ENCODE measurements at regions of chr4 and their contacts with region 1.

Region 1: GRCh38 chr4:89929425-89930159 is 34.9 kb downstream of the MMRN1 start:
- DNase-seq: no peak
- H3K4me3 ChIP-seq: no peak overlapping the region
- H3K27ac ChIP-seq: no peak overlapping the region
- H3K4me1 ChIP-seq: no peaks in the 10 kb centered on the region
- H3K27me3 ChIP-seq: no peaks in the 10 kb centered on the region
- CTCF ChIP-seq: no peak
- POLR2A ChIP-seq: no peak

Region 2: DNA sequence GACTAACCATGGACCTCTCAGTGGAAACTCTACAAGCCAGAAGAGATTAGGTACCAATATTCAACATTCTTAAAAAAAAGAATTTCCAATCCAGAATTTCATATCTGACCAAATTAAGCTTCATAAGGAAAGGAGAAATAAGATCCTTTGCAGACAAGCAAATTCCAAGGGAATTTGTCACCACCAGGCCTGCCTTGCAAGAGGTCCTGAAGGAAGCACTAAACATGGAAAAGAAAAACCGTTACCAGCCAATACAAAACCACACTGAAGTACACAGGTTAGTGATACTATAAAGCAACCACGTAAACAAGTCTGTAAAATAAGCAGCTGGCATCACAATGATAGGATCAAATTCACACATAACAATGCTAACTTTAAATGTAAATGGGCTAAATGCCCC is 1029.2 kb before region 1 on chr4:
- intact Hi-C with region 1: no loop called
- DNase-seq: no peak
- H3K4me3 ChIP-seq: no peak overlapping the region
- H3K27ac ChIP-seq: no peak overlapping the region
- H3K4me1 ChIP-seq: no peaks in the 10 kb centered on the region
- H3K27me3 ChIP-seq: no peaks in the 10 kb centered on the region
- CTCF ChIP-seq: no peak
- POLR2A ChIP-seq: no peak

Region 3: DNA sequence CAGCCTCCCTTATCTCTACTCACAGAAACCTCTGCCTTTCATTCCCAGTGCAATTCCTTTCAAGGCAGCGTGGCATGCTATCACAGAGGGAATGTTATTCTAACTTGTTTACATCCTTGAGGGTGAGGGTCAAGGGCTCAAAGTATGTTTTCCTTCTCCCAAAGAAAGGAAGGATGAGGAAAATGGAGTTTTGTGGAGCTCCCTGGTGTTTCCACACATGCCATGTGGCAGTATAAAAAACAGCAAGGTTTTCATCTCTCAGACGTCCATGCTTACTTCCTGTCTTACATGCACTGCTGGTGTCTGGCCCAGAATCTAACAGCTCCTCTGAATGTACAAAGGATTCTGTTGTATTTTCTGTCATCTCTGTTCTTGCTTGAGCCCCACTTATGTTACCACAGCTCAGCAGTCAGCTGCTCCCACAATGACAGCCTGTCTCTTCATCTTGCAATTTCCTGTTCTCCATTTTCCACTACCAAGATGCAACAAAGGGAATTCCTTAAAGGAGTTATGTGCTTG is 220.6 kb before region 1 on chr4:
- intact Hi-C with region 1: loop called (anchors 5 kb)
- DNase-seq: no peak
- H3K4me3 ChIP-seq: no peak overlapping the region
- H3K27ac ChIP-seq: no peak overlapping the region
- H3K4me1 ChIP-seq: no peaks in the 10 kb centered on the region
- H3K27me3 ChIP-seq: no peaks in the 10 kb centered on the region
- CTCF ChIP-seq: no peak
- POLR2A ChIP-seq: no peak